ENCODE measurements at regions of chr18 and their contacts with region 1.

Region 1: DNA sequence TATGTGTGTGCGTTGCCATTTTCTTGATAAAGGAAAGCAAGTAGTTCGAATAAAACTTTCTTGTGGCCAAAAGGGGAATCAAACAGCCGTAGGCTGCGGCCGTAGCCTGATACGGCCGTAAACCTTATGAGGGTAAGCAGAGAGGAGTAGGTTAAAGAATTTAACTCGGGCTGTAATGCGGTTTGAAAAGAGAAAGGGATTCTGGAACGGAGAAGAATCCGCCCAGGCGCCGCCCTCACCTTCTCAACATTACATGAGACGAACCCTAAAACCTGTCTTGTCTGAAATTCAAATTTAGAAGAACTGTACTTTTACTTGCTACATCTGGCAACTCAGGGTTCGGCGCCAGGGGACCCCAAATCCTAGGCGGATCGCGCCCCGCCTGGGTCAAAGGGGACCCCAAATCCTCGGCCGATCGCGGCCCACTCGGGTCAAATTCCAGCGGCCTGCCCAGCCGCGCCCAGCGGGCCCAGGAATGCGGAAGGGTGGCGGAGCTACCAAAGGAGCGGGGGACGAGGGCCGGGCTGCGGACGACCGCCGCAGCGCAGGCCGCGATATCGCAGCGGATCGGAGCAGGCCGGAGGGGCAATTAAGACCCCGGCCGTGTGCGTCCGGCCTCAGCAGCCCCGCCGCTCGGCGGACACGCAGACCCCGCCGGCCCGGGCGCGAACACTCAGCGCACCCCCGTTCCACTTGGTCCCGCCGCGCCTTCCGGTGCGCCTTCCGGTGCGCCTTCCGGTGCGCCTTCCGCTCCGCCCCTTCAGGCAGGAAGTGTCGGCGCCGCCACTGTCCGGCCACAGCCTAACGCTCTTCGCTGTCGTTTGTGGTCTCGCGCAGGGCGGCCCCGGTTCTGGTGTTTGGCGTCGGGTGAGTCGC is at the start of gene MYL12B:
- DNase-seq: peak; percentile 61 to 73
- ATAC-seq: peak; percentile 79 to 89
- H3K4me3 ChIP-seq: peak within 1 kb of the TSS; percentile 73 to 98 (median 82)
- H3K27ac ChIP-seq: peak within 1 kb of the TSS; percentile 99
- H3K4me1 ChIP-seq: peaks cover 69 to 83% of the 10 kb centered on the region in 2 donors
- H3K27me3 ChIP-seq: no peaks in the 10 kb centered on the region
- CTCF ChIP-seq: peak in 4 of 5 experiments; percentile 12 to 36 (median 24)
- POLR2A ChIP-seq: peak; percentile 68 to 76
- total RNA-seq, gene MYL12B: 100 to 293 (median 185) TPM

Region 2: DNA sequence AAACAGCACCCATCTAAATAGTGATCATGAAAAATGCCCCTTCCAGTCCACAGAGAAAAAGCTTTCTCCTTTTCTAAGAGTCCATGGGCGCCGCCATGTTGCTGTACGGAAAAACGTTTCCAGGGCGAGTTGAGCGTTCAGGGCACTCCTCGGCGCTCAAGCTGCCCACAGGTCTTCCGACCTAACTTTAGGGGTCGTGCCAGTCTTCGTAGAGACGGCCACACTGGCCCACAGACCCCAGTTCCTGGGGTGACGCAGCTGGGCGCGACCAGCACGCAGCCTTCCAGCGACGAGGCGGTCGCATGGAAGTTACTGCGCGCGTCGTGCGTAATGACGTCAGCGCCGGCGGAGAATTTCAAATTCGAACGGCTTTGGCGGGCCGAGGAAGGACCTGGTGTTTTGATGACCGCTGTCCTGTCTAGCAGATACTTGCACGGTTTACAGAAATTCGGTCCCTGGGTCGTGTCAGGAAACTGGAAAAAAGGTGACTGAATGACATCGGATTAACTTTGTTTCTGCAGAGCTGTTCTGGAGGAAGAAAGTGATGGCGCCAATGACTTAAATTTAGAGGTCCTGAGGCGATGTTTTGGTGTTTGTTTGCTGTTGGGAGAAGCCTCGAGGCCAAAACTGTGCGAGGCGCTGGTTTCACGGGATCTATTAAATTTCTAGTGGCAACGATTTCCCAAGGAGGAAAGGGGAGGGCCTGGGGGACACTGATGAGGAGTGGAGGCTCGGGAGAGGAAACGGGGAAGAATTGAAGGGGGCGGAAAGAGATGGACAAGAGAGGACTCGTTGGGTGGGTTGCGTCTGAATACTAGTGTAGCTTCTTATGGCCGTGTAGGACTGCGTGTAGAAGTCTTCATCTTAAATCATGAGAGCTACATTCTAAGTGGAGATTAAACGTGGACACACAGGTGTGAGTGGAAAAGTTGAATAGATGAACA is 690.1 kb before region 1 on chr18 and contains the starts of genes METTL4 and NDC80:
- in situ Hi-C with region 1: loop called in 1 of 4 experiments (anchors 25 kb)
- intact Hi-C with region 1: no loop called
- DNase-seq: peak; percentile 62 to 71
- ATAC-seq: peak; percentile 91 to 93
- H3K4me3 ChIP-seq: peak within 1 kb of the TSS; percentile 59 to 85 (median 72)
- H3K27ac ChIP-seq: peak within 1 kb of the TSS; percentile 87 to 97 (median 90)
- H3K4me1 ChIP-seq: peaks cover 15 to 16% of the 10 kb centered on the region in 2 donors
- H3K27me3 ChIP-seq: no peaks in the 10 kb centered on the region
- CTCF ChIP-seq: no peak
- POLR2A ChIP-seq: peak; percentile 20 to 29
- total RNA-seq, gene METTL4: 1.4 to 2.9 (median 1.8) TPM
- total RNA-seq, gene NDC80: 0.27 TPM in 1 of 4 donors, not detected in the others

Region 3: GRCh38 chr18:3171631-3172030 is 90.0 kb before region 1 on chr18:
- in situ Hi-C with region 1: no loop called
- intact Hi-C with region 1: no loop called
- DNase-seq: no peak
- ATAC-seq: no peak
- H3K4me3 ChIP-seq: no peak overlapping the region
- H3K27ac ChIP-seq: peak overlapping the region in 3 of 4 donors; percentile 14 to 41 (median 23)
- H3K4me1 ChIP-seq: no peaks in the 10 kb centered on the region
- H3K27me3 ChIP-seq: no peaks in the 10 kb centered on the region
- CTCF ChIP-seq: no peak
- POLR2A ChIP-seq: no peak

Region 4: GRCh38 chr18:3447895-3448837 is 186.6 kb after region 1 on chr18:
- in situ Hi-C with region 1: no loop called
- intact Hi-C with region 1: loop called (anchors 2 kb)
- DNase-seq: peak; percentile 94 to 95
- ATAC-seq: peak; percentile 55 to 57
- H3K4me3 ChIP-seq: peak overlapping the region; percentile 71 to 97 (median 82)
- H3K27ac ChIP-seq: peak overlapping the region; percentile 98 to 99 (median 99)
- H3K4me1 ChIP-seq: peaks cover 8 to 13% of the 10 kb centered on the region in 2 donors
- H3K27me3 ChIP-seq: no peaks in the 10 kb centered on the region
- CTCF ChIP-seq: peak in 1 of 5 experiments; percentile 7
- POLR2A ChIP-seq: peak; percentile 97 to 98